ENCODE measurements at regions of chr9 and their contacts with region 1.

Region 1: DNA sequence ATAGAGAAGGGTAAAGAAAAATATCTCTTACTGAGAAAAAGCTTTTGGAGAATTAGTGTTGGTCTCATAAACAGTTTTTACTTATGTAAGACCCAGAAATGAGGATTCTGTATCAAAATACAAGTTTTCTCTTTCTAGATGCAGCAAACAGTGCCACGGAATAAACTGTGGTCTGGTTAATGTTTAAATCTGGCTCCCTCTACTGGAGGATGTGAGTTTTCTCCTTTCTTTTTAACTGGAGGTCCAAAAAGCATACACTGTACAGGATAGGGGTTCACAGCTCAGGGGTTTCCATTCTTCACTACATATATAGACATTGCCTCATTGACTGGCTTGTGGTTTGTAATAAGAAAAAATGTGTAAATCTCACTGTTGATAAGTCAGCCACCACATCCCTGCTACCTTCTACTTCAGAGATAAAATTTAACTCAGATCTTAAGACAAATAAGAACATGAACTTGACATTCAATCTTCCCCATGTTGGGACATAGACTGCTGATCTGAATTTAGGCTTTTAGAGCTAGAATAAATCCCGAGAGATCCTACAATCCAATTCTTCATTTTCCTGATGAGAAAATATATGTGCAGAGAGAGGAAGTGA is 98.9 kb downstream of the CFAP95 start:
- DNase-seq: no peak
- H3K4me3 ChIP-seq: no peak overlapping the region
- H3K27ac ChIP-seq: no peak overlapping the region
- H3K4me1 ChIP-seq: no peaks in the 10 kb centered on the region
- H3K27me3 ChIP-seq: no peaks in the 10 kb centered on the region
- CTCF ChIP-seq: peak; percentile 37 to 59 (median 50)
- POLR2A ChIP-seq: no peak

Region 2: GRCh38 chr9:69745716-69746437 is 173.7 kb before region 1 on chr9:
- intact Hi-C with region 1: loop called (anchors 10 kb)
- DNase-seq: no peak
- H3K4me3 ChIP-seq: no peak overlapping the region
- H3K27ac ChIP-seq: no peak overlapping the region
- H3K4me1 ChIP-seq: no peaks in the 10 kb centered on the region
- H3K27me3 ChIP-seq: no peaks in the 10 kb centered on the region
- CTCF ChIP-seq: no peak
- POLR2A ChIP-seq: no peak

Measured in prostate gland (tissue), 2 donors.